PC-3 (cell line): ENCODE measurements at regions of chr2 and their contacts with region 1.

Region 1: GRCh38 chr2:65778137-65778536 is 345.7 kb upstream of the SPRED2 start:
- DNase-seq: no peak
- ATAC-seq: no peak
- H3K4me3 ChIP-seq: no peak overlapping the region
- H3K27ac ChIP-seq: no peak overlapping the region
- H3K4me1 ChIP-seq: no peaks in the 10 kb centered on the region
- H3K27me3 ChIP-seq: peaks cover 62% of the 10 kb centered on the region
- CTCF ChIP-seq: no peak

Region 2: DNA sequence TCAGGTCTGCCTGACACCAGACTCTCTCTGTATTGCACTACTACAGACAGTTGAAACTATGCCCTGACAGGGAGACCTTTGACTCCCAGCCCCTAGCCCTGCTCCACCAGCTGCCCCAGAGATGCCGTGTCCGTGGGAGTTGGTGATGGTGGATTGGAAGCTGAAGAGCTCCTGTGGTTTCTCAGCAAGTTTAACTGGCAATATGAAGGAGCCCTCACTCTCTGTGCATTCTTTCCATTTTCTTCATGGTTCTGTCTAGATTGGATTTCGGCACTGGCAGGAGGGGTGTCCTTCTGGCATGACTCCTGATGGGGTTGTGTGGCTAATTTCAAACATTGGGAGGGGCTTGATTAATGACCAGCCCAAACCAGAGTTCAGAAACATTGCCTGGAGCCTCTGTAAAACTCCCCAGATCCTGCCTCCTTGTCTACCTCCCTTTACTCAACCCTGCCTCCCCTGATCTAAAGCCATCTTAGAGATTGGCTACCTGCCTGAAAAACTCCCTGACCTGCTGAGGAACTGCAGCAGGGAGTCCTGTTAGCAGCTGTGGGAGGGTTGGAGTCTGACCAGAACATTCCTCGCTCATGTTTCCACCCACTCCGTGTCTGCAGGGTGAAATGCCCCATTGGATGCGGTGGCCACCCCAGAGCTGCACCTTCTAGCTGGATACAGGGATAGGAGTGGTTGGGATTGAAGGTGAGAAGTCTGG is 138.8 kb before region 1 on chr2:
- CTCF ChIA-PET with region 1: no interaction called
- POLR2A ChIA-PET with region 1: no interaction called
- intact Hi-C with region 1: loop called (anchors 2 kb)
- DNase-seq: peak; percentile 20
- ATAC-seq: no peak
- H3K4me3 ChIP-seq: 0 out of 2 replicates have a peak overlapping the region, but pooled peaks have one; percentile 60
- H3K27ac ChIP-seq: no peak overlapping the region
- H3K4me1 ChIP-seq: no peaks in the 10 kb centered on the region
- H3K27me3 ChIP-seq: peaks cover 31% of the 10 kb centered on the region
- CTCF ChIP-seq: no peak

Region 3: DNA sequence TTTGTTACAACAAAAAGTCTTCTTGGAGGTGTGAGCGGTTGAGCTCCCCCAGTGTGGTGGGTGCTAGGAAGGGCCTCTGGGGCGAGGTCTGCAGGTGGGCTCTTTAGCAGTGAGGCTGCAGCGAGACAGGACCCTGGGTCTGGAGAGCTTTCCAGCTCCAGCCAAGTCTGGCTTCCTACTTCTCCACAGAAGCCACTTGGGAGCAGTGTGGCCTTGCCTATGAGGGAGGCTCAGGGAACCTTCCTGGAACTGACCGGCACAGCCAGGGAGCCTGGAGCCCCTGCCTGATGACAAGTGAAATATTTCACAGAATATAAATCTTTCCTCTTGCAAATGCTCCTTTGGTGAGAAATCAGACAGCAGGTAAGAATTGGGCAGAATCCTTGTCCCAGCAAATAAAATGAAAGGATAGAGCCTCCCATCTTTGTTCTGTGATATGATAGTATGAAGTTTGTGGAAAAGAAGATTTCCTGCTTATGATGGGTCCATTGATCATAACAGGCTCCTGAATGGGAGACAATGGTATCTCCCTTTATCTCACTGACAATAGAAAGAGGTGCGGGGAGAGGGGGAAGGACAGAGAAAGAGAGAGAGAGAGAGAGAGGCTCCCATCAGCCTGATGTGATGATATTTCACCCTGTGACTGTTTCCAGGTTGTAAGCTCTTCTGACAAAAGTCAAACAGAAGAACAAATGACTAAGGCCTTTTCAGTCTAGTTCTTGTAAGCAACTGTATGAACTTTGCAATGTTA is 55.9 kb before region 1 on chr2:
- CTCF ChIA-PET with region 1: no interaction called
- POLR2A ChIA-PET with region 1: interaction called, 3 read pairs
- intact Hi-C with region 1: loop called (anchors 5 kb)
- DNase-seq: peak; percentile 55
- ATAC-seq: peak; percentile 83
- H3K4me3 ChIP-seq: no peak overlapping the region
- H3K27ac ChIP-seq: no peak overlapping the region
- H3K4me1 ChIP-seq: peaks cover 20% of the 10 kb centered on the region
- H3K27me3 ChIP-seq: peaks cover 29% of the 10 kb centered on the region
- CTCF ChIP-seq: peak; percentile 60